B cell (primary cell): ENCODE measurements at regions of chr1 and their contacts with region 1.

Region 1: DNA sequence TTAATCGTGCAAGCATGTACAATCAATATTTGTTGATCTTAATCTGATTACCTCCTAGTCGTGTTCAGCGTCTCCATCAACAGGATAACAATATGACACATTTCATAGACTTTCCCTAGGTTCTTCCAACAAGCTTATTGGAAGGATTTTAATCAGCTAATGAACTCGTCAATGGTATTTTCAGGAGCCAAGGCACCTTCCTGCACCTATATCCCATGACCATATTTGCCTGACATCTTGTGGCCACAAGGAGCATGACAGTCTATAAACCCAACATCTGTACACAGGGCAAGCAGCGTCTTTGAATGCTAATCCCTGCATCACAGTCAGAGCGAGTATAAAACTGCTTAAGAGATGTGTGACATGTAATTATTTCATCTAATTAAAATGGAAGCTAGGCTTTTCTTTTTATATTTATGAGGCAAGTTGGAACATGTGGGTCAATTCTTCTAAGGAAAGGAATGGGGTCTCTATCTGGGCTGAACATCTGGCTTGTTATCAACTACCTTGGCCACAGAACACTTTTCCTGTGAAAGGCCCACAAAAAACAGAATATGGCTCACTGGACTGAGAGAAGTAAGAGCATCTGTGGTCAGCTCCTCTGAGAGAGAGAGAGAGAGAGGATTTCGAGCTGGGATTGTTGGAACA is 388.8 kb downstream of the NTNG1 start:
- DNase-seq: peak; percentile 71
- ATAC-seq: peak; percentile 89
- H3K4me3 ChIP-seq: no peak overlapping the region
- H3K4me3 Mint-ChIP-seq: no peak overlapping the region
- H3K27ac ChIP-seq: no peak overlapping the region
- H3K27ac Mint-ChIP-seq: no peak overlapping the region
- H3K4me1 ChIP-seq: peaks cover 0 to 3% of the 10 kb centered on the region in 2 donors
- H3K4me1 Mint-ChIP-seq: peaks cover 10% of the 10 kb centered on the region
- H3K27me3 ChIP-seq: no peaks in the 10 kb centered on the region
- H3K27me3 Mint-ChIP-seq: no peaks in the 10 kb centered on the region
- CTCF ChIP-seq: peak; percentile 92

Region 2: DNA sequence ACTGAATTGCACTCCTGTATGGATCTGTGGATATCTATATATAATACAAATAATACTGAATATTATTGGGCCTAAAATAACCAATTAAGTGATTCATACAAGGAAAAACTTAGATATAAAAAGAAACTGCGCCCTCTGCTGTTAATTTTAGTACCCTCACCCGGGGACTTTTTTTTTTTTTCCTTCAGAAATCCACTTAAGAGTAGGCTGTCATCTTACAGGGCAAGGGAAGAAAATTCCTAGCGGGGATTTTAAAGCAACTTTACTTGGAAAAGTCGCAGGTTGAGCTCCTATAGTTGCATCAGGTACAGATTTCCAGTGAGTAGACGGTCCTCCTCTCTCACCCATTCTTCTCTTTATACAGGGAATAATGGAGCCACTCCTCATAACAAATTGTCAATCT is 387.5 kb before region 1 on chr1:
- CTCF ChIA-PET with region 1: interaction called, 20 read pairs
- POLR2A ChIA-PET with region 1: no interaction called
- intact Hi-C with region 1: loop called (anchors 2 kb)
- DNase-seq: peak; percentile 57
- ATAC-seq: no peak
- H3K4me3 ChIP-seq: peak overlapping the region; percentile 39 to 75 (median 56)
- H3K4me3 Mint-ChIP-seq: peak overlapping the region; percentile 95
- H3K27ac ChIP-seq: no peak overlapping the region
- H3K27ac Mint-ChIP-seq: no peak overlapping the region
- H3K4me1 ChIP-seq: peaks cover 18 to 20% of the 10 kb centered on the region in 2 donors
- H3K4me1 Mint-ChIP-seq: peaks cover 21% of the 10 kb centered on the region
- H3K27me3 ChIP-seq: peaks cover 0 to 27% (median 18%) of the 10 kb centered on the region in 4 experiments
- H3K27me3 Mint-ChIP-seq: peaks cover 23% of the 10 kb centered on the region
- CTCF ChIP-seq: peak; percentile 96

Region 3: DNA sequence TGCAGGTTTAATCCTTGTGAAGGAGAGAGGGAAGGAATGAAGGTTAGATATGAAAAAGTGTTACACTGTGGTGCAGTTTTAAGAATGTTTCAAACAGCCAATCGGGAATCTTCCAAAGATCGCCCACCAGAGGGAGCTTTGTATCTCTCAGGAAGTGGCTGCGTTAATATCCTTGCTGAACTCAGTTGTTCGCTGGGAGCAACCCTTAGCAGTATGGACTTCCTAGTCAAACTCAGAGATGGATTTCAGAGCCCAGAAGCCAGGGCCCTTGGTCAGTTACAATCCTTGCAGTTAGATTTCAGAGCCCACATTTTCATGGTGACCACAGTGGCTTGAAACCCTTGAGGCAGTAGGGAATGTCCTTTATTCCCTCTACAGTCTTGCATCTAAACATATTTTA is 252.6 kb before region 1 on chr1:
- CTCF ChIA-PET with region 1: interaction called, 81 read pairs
- POLR2A ChIA-PET with region 1: no interaction called
- intact Hi-C with region 1: loop called (anchors 1 kb)
- DNase-seq: peak; percentile 35
- ATAC-seq: no peak
- H3K4me3 ChIP-seq: no peak overlapping the region
- H3K4me3 Mint-ChIP-seq: no peak overlapping the region
- H3K27ac ChIP-seq: no peak overlapping the region
- H3K27ac Mint-ChIP-seq: no peak overlapping the region
- H3K4me1 ChIP-seq: peaks cover 2 to 5% of the 10 kb centered on the region in 2 donors
- H3K4me1 Mint-ChIP-seq: peaks cover 15% of the 10 kb centered on the region
- H3K27me3 ChIP-seq: no peaks in the 10 kb centered on the region
- H3K27me3 Mint-ChIP-seq: no peaks in the 10 kb centered on the region
- CTCF ChIP-seq: peak; percentile 34

Region 4: DNA sequence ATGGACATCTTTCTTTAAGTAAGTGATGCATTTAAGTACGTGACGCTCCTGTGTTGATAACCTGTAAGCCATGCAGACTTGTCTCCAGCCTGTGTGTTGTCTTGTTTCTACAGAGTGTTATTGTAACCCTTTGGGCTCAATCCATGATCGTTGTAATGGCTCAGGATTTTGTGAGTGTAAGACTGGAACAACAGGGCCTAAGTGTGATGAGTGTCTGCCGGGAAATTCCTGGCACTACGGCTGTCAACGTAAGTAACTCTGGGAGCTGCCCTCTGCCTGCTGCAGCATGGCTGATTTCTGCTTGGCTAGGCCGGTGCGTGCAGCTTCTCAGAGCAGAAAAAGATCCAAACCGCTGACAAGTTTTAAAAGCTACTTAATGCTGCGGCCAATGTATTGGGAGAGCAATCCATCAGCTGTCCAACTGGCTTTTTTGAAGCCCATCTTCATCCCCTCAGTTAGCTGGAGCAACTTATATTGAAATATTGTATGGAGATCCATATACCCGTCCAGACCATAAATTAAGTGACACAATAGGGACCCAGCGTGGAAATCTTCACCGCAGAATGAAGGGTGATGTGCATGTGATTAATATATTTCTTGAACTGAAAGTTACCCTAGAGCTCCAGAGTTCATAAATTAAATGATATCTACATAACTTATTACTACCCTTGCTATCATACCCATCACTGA is 92.9 kb before region 1 on chr1:
- CTCF ChIA-PET with region 1: interaction called, 191 read pairs
- POLR2A ChIA-PET with region 1: no interaction called
- intact Hi-C with region 1: no loop called
- DNase-seq: no peak
- ATAC-seq: no peak
- H3K4me3 ChIP-seq: no peak overlapping the region
- H3K4me3 Mint-ChIP-seq: no peak overlapping the region
- H3K27ac ChIP-seq: no peak overlapping the region
- H3K27ac Mint-ChIP-seq: no peak overlapping the region
- H3K4me1 ChIP-seq: peaks cover 22% of the 10 kb centered on the region in 2 donors
- H3K4me1 Mint-ChIP-seq: peaks cover 32% of the 10 kb centered on the region
- H3K27me3 ChIP-seq: no peaks in the 10 kb centered on the region
- H3K27me3 Mint-ChIP-seq: no peaks in the 10 kb centered on the region
- CTCF ChIP-seq: no peak

Region 5: GRCh38 chr1:107547363-107548155 is 17.9 kb after region 1 on chr1:
- CTCF ChIA-PET with region 1: interaction called, 13 read pairs
- POLR2A ChIA-PET with region 1: no interaction called
- intact Hi-C with region 1: no loop called
- DNase-seq: no peak
- ATAC-seq: no peak
- H3K4me3 ChIP-seq: no peak overlapping the region
- H3K4me3 Mint-ChIP-seq: no peak overlapping the region
- H3K27ac ChIP-seq: no peak overlapping the region
- H3K27ac Mint-ChIP-seq: no peak overlapping the region
- H3K4me1 ChIP-seq: peaks cover 3 to 7% of the 10 kb centered on the region in 2 donors
- H3K4me1 Mint-ChIP-seq: no peaks in the 10 kb centered on the region
- H3K27me3 ChIP-seq: no peaks in the 10 kb centered on the region
- H3K27me3 Mint-ChIP-seq: no peaks in the 10 kb centered on the region
- CTCF ChIP-seq: no peak